Activated naive CD4-positive, alpha-beta T cell treated with anti-CD3 and anti-CD28 coated beads for 36 hours (primary cell): ENCODE measurements at regions of chr1 and their contacts with region 1.

Region 1: DNA sequence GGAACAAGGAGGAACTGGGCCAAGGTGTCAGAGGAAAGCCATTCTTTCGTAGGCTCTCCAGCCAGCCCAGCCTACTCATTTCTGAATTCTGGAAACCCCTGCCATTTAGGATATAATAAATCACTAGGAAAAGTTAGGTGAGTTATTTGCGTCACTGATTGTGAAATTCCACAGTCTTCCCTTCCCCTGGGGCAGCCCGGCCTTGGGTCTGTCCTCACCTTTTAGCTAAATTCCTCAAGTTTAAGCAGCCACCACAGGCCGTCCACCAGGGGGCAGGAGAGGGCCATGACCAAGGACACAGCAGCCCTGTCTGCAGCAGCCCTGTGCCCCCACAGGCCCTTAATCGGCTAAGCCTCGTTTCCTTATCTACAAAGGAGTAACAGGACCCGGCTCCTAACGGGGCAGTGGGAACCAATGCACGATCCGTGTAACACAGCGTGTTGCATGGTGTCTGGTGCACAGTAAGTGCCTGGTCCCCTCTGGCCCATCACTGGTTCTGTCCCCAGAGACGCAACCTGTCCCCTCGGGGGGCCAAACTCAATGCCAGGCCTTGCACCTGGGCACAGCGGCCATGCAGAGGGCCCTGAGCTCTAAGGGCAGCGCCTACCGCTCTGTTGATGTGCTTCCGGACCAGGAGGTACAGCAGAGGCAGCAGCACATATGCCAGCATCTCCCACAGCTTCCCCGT is 18.1 kb downstream of the GPR157 start:
- DNase-seq: peak; percentile 92
- H3K4me3 Mint-ChIP-seq: no peak overlapping the region
- H3K27ac Mint-ChIP-seq: no peak overlapping the region
- H3K4me1 Mint-ChIP-seq: no peaks in the 10 kb centered on the region
- H3K27me3 Mint-ChIP-seq: no peaks in the 10 kb centered on the region

Region 2: GRCh38 chr1:9025449-9025848 is 85.4 kb before region 1 on chr1:
- CTCF ChIA-PET with region 1: no interaction called
- intact Hi-C with region 1: no loop called
- DNase-seq: no peak
- H3K4me3 Mint-ChIP-seq: no peak overlapping the region
- H3K27ac Mint-ChIP-seq: no peak overlapping the region
- H3K4me1 Mint-ChIP-seq: no peaks in the 10 kb centered on the region
- H3K27me3 Mint-ChIP-seq: peaks cover 2% of the 10 kb centered on the region

Region 3: DNA sequence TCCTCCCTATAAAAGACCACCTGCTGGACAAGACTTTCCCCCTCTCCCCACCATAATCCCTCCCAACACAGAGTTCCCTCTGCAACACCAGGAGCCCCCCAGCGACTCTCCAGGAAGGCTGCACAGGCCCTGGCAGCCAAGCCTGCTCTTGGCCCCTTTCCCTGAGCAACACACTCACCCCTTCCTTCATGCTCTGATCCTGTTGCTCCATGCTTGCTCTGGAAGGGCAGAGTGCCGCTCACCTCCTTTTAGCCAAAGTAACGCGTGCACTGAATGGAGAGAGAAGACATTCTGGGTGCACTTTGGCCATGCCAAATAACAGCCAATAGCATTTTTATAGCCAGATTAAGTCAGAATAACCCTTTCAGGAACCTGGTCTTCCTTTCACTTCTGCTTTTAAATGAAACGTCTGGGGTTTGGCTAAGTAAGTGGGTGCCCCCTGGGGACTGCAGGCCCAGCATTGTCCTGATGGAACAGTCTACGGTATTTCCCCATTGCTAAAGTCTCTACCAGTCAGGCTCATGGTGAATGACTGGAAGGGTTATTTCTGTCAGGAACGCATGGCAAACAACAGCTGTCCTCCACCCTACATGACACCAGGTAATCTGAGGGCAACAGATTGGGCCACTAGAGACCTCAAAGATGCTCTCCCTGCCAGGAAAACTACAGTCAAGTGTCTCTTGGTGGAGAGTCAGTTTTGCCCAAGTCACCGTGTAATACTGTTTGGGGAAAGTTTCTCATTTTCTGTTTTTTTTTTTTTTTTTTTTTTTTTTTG is 41.3 kb before region 1 on chr1 and contains the start of gene SLC2A5:
- CTCF ChIA-PET with region 1: no interaction called
- intact Hi-C with region 1: no loop called
- DNase-seq: no peak
- H3K4me3 Mint-ChIP-seq: no peak within 1 kb of the TSS
- H3K27ac Mint-ChIP-seq: no peak within 1 kb of the TSS
- H3K4me1 Mint-ChIP-seq: peaks cover 4% of the 10 kb centered on the region
- H3K27me3 Mint-ChIP-seq: no peaks in the 10 kb centered on the region
- total RNA-seq, gene SLC2A5: not detected

Region 4: GRCh38 chr1:9084906-9085305 is 25.9 kb before region 1 on chr1:
- CTCF ChIA-PET with region 1: no interaction called
- intact Hi-C with region 1: no loop called
- DNase-seq: no peak
- H3K4me3 Mint-ChIP-seq: no peak overlapping the region
- H3K27ac Mint-ChIP-seq: no peak overlapping the region
- H3K4me1 Mint-ChIP-seq: peaks cover 13% of the 10 kb centered on the region
- H3K27me3 Mint-ChIP-seq: peaks cover 2% of the 10 kb centered on the region

Region 5: GRCh38 chr1:9121496-9122409 is 10.9 kb after region 1 on chr1:
- CTCF ChIA-PET with region 1: interaction called, 12 read pairs
- intact Hi-C with region 1: no loop called
- DNase-seq: peak; percentile 75
- H3K4me3 Mint-ChIP-seq: peak overlapping the region; percentile 34
- H3K27ac Mint-ChIP-seq: peak overlapping the region; percentile 43
- H3K4me1 Mint-ChIP-seq: peaks cover 22% of the 10 kb centered on the region
- H3K27me3 Mint-ChIP-seq: peaks cover 4% of the 10 kb centered on the region

Region 6: GRCh38 chr1:9145021-9145668 is 34.3 kb after region 1 on chr1:
- CTCF ChIA-PET with region 1: interaction called, 12 read pairs
- intact Hi-C with region 1: no loop called
- DNase-seq: no peak
- H3K4me3 Mint-ChIP-seq: no peak overlapping the region
- H3K27ac Mint-ChIP-seq: no peak overlapping the region
- H3K4me1 Mint-ChIP-seq: no peaks in the 10 kb centered on the region
- H3K27me3 Mint-ChIP-seq: no peaks in the 10 kb centered on the region

Region 7: DNA sequence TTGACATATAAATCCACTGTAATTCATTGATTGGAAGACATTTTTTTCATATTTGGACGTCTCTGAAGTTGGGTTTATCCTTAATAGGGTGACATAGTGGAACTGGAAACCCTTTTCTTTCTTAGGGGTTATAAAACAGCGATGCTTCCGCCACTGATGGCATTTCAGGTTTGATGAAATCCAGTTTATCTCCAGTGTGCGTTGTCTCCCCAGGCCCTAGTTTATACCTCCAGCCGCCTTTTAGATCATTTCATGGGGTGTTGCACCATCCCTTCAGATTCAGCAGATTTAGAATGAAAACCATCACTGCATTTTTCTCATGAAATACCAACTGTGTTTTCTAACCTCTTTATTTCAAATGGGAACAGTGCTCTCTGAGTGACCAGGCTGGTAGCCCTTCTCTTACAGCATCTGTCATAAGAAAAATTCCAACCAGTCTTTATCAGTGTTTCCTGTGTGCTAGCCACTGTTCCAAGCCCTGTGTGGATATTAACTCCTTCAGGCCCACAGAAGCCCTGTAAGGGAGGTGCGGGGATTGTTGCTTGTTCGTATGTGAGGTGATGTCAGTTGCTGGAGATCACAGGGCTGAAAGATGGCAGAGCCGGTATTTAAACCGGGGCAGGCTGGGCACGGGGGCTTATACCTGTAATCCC is 142.8 kb after region 1 on chr1:
- CTCF ChIA-PET with region 1: no interaction called
- intact Hi-C with region 1: no loop called
- DNase-seq: no peak
- H3K4me3 Mint-ChIP-seq: no peak overlapping the region
- H3K27ac Mint-ChIP-seq: no peak overlapping the region
- H3K4me1 Mint-ChIP-seq: peaks cover 12% of the 10 kb centered on the region
- H3K27me3 Mint-ChIP-seq: no peaks in the 10 kb centered on the region